SK-N-SH (cell line): ENCODE measurements at regions of chr11 and their contacts with region 1.

Region 1: GRCh38 chr11:396948-397548 is 3.0 kb downstream of the PKP3 start:
- DNase-seq: peak; percentile 95
- H3K4me3 ChIP-seq: peak overlapping the region; percentile 49 to 51
- H3K27ac ChIP-seq: no peak overlapping the region; a peak in 1 of 4 replicates
- H3K4me1 ChIP-seq: peaks cover 10 to 12% of the 10 kb centered on the region in 2 experiments; a peak in 3 of 4 replicates
- H3K27me3 ChIP-seq: peaks cover 9% of the 10 kb centered on the region; the same call in 1 of the 2 replicates
- CTCF ChIP-seq: peak; percentile 61
- EP300 ChIP-seq: no peak
- RAD21 ChIP-seq: peak; percentile 62

Region 2: GRCh38 chr11:215581-216037 is 181.4 kb before region 1 on chr11:
- CTCF ChIA-PET with region 1: no interaction called
- POLR2A ChIA-PET with region 1: no interaction called
- DNase-seq: no peak
- H3K4me3 ChIP-seq: no peak overlapping the region
- H3K27ac ChIP-seq: no peak overlapping the region
- H3K4me1 ChIP-seq: peaks cover 0 to 4% of the 10 kb centered on the region in 2 experiments; a peak in 1 of 4 replicates
- H3K27me3 ChIP-seq: no peaks in the 10 kb centered on the region
- CTCF ChIP-seq: no peak
- EP300 ChIP-seq: no peak
- RAD21 ChIP-seq: no peak

Region 3: GRCh38 chr11:304915-305843 is 91.9 kb before region 1 on chr11:
- CTCF ChIA-PET with region 1: interaction called, 11 read pairs
- POLR2A ChIA-PET with region 1: no interaction called
- DNase-seq: peak; percentile 82
- H3K4me3 ChIP-seq: no peak overlapping the region
- H3K27ac ChIP-seq: no peak overlapping the region
- H3K4me1 ChIP-seq: peaks cover 5 to 6% of the 10 kb centered on the region in 2 experiments; a peak in 1 of 4 replicates
- H3K27me3 ChIP-seq: no peaks in the 10 kb centered on the region
- CTCF ChIP-seq: peak; percentile 68
- EP300 ChIP-seq: no peak
- RAD21 ChIP-seq: peak; percentile 69

Region 4: DNA sequence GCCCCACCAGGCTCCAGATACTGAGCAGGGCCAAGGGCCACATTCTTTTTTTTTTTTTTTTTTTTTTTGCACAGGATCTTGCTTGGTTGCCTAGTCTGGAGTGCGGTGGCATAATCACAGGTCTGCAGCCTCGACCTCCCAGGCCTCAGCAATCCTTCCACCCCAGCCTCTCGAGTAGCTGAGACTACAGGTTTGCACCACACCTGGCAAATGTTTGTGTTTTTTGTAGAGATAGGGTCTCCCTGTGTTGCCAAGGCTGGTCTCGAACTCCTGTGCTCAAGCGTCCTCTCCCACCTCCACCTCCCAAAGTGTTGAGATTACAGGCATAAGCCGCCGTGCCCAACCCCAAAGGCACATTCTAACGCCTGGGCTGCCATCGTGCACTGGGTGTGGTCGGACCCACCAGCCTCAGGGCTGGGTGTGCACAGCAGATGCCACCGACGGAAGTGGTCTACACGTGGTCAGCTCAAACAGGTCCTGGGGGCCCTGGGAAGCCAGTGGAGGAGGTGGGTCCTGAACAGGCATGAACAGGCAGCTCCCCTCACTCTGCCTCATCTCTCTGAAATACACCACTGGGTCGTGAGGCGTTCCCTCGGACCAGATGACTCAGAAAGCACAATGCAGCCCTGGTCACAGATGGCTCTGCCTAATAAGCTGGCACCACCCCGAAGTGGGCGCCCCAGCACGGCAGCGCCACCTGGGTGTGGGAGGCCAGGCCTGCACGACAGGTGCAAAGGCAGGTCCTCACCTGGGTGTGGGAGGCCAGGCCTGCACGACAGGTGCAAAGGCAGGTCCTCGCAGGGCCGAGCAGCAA is 32.9 kb before region 1 on chr11:
- CTCF ChIA-PET with region 1: interaction called, 19 read pairs
- POLR2A ChIA-PET with region 1: no interaction called
- DNase-seq: peak; percentile 85
- H3K4me3 ChIP-seq: no peak overlapping the region
- H3K27ac ChIP-seq: no peak overlapping the region
- H3K4me1 ChIP-seq: peaks cover 0 to 12% of the 10 kb centered on the region in 2 experiments; a peak in 1 of 4 replicates
- H3K27me3 ChIP-seq: no peaks in the 10 kb centered on the region
- CTCF ChIP-seq: peak; percentile 59
- EP300 ChIP-seq: no peak
- RAD21 ChIP-seq: no peak; the same call in 1 of the 2 replicates

Region 5: DNA sequence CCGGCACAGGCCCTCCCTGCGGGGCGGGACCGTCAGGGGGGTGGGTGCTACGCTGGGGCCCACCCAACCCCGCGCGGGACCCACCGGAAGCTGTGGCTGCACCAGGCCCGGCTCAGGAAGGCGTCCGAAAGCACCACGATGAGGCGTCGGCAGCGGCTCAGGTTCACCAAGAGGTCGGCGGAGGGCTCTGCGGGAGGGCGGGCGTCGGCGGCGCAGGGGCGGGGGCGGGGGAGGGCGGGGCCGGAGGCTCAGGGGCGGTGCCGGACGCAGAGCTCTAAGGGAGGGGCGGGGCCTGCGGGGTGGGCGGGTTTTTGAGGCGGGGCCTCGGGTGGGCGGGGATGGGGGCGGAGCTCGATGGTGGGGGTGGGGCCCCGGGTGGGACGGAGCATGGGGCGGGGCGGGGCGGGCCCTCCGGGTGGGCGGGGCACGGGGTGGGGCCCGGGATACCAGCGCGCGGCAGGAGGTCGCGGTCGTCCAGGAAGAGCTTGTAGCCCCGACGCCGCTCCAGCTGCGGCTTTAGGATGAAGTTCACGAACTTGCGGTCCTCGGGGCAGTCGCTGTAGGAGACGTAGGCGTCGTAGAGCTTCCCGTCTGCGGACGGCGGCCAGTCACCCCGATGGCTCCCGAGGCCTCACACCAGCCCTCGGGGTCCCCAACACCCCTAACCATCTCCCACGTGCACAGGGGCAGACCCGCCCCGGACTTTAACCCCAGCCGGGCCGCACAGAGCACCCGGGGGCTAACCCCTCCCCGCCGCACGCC is 10.1 kb after region 1 on chr11:
- CTCF ChIA-PET with region 1: interaction called, 31 read pairs
- POLR2A ChIA-PET with region 1: no interaction called
- DNase-seq: peak; percentile 99
- H3K4me3 ChIP-seq: peak overlapping the region; percentile 64 to 72
- H3K27ac ChIP-seq: peak overlapping the region in 1 of 2 experiments; percentile 77; a peak in 2 of 4 replicates
- H3K4me1 ChIP-seq: peaks cover 0 to 19% of the 10 kb centered on the region in 2 experiments; a peak in 1 of 4 replicates
- H3K27me3 ChIP-seq: no peaks in the 10 kb centered on the region
- CTCF ChIP-seq: no peak
- EP300 ChIP-seq: no peak
- RAD21 ChIP-seq: no peak

Region 6: DNA sequence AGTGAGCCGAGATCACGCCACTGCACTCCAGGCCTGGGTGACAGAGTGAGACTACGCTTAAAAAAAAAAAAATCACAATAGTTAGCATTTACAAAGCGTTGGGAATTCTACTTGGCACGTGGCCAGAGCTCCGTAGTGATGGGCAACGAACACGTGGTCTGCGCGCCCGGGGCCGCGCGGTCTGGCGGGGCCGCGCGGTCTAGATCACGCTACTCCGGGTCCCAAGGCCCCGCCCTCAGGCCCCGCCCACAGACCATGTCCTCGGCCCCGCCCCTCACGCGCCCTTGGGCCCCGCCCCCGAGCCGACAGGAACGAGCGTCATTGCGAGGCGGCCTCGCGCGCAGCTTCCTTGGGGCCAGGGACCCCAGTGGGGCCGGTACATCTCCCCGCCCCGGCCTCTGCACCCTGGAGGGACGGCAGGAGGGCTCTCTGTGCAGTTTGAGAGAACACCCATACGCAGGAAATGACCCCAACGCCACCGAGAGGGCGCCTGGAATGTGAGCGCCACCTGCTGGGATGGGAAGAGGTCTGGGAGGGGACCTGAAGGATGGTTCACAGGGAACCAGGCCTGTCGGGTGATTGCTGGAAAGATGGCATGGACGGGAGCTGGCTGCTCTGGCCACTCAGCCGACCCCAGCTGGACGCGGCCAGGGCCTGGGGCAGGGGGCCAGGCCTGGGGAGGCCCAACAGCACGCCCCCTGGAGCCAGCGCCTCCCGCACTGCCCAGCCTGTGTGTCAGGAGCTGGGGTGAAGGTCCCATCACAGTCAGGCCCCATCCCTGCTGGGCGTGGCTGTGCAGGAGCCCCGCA is 51.1 kb after region 1 on chr11:
- CTCF ChIA-PET with region 1: interaction called, 31 read pairs
- POLR2A ChIA-PET with region 1: interaction called, 5 read pairs
- DNase-seq: peak; percentile 98
- H3K4me3 ChIP-seq: peak overlapping the region; percentile 63 to 77
- H3K27ac ChIP-seq: peak overlapping the region; percentile 81 to 89
- H3K4me1 ChIP-seq: peaks cover 6 to 24% of the 10 kb centered on the region in 2 experiments; a peak in 2 of 4 replicates
- H3K27me3 ChIP-seq: no peaks in the 10 kb centered on the region
- CTCF ChIP-seq: peak; percentile 93
- EP300 ChIP-seq: no peak
- RAD21 ChIP-seq: peak; percentile 78

Region 7: GRCh38 chr11:506238-506994 is 109.4 kb after region 1 on chr11:
- CTCF ChIA-PET with region 1: no interaction called
- POLR2A ChIA-PET with region 1: no interaction called
- DNase-seq: peak; percentile 99
- H3K4me3 ChIP-seq: peak overlapping the region; percentile 86 to 87
- H3K27ac ChIP-seq: peak overlapping the region; percentile 98 to 99
- H3K4me1 ChIP-seq: peaks cover 7 to 9% of the 10 kb centered on the region in 2 experiments; a peak in 2 of 4 replicates
- H3K27me3 ChIP-seq: no peaks in the 10 kb centered on the region
- CTCF ChIP-seq: no peak
- EP300 ChIP-seq: no peak
- RAD21 ChIP-seq: no peak